ENCODE measurements at regions of chr14 and their contacts with region 1.

Region 1: GRCh38 chr14:101235335-101236103 is 325.8 kb upstream of the DIO3 start:
- DNase-seq: no peak
- ATAC-seq: peak; percentile 94
- H3K4me3 ChIP-seq: no peak overlapping the region
- H3K27ac ChIP-seq: no peak overlapping the region
- H3K4me1 ChIP-seq: no peaks in the 10 kb centered on the region
- H3K27me3 ChIP-seq: no peaks in the 10 kb centered on the region
- CTCF ChIP-seq: peak; percentile 85

Region 2: DNA sequence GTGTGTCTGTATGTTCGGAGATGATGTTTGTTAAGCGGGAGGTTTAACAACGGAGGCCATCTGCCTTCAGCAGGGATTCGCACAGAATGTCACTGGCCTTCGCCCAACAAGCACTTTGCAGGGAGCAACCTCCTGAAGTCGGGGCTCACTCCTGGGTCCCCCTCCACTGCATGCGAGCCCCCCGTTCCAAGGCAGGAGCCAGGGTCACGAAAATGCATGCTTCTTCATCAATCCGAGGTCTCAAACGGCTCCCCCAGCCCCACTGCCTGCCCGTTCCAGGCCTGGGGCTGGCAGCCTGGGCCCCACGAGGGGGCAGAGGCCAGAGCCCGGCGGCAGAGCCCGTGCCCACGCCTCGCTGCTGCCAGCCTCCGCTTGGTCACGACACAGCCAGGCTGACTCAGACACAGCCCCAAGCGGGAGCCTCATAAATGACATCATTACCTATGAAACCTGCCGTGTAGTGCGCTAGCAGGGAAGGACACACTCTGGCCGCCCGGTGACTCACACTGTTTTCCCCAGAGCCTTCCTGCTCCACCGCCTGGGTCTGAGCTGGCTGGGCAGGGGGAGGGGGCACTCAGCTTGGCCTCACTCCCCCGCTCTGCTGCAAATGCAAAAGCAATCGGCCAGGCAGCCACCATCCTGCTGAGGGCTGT is 162.4 kb before region 1 on chr14:
- CTCF ChIA-PET with region 1: interaction called, 5 read pairs
- POLR2A ChIA-PET with region 1: no interaction called
- in situ Hi-C with region 1: no loop called
- intact Hi-C with region 1: loop called (anchors 10 kb)
- DNase-seq: peak; percentile 75
- ATAC-seq: peak; percentile 95
- H3K4me3 ChIP-seq: peak overlapping the region in 1 of 2 experiments; percentile 23; a peak in 2 of 4 replicates
- H3K27ac ChIP-seq: peak overlapping the region; percentile 86
- H3K4me1 ChIP-seq: peaks cover 35% of the 10 kb centered on the region
- H3K27me3 ChIP-seq: no peaks in the 10 kb centered on the region
- CTCF ChIP-seq: no peak

Measured in Panc1 (cell line).